ENCODE measurements at regions of chr2 and their contacts with region 1.

Region 1: DNA sequence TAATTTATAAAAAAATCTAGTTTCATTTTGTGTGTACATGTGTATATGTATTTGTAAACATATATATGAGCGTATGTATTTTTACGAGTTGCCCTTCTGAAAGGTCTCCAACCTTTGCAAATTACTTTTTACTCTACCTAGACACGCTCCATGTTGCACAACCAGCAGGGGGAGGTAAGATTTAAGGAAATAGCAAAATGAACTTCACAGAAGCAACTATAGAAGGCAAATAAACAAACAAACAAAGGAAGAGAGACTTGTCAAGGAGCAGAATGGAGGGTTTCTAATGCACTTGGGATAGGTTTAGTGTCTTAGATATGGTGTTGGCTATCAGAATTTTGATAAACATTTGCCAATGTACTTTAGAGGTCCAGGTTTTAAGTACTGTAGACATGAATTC is 820.5 kb upstream of the POU3F3 start:
- DNase-seq: no peak
- ATAC-seq: no peak
- H3K4me3 ChIP-seq: no peak overlapping the region
- H3K27ac ChIP-seq: no peak overlapping the region
- H3K4me1 ChIP-seq: no peaks in the 10 kb centered on the region
- H3K27me3 ChIP-seq: peaks cover 0 to 2% (median 0%) of the 10 kb centered on the region in 3 donors
- CTCF ChIP-seq: no peak

Region 2: DNA sequence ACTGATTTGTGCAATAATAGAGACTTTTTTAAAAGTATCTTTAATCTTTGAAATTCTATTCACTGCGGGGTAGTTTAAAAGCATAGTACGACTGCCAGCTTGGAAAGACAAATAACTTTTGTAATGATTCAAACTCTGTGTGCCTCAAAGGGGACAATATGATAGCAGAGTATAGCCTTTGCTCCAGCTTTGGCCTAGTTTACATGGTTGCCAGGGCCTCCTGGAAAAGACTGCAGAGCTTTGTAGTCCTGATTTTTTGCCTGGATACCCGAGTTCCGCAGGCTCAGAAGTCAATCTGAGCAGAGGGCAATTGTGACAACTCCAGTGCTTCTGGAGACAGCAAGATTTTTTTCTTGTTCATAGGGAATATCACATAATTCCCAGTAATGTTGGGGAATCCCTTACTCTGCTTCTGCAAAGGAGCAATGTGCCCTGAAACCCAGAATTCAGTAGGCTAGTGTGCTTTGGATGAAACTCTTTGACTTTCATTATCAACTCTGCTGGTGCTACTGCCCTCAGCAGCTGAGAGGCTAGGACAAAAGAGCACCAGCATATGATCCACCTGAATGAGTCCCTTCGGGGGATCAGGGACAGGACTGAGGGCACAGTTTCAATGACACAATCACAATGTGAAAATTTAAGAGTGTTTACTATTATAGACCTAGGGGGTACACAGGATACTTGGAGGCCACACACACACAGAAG is 503.4 kb before region 1 on chr2:
- intact Hi-C with region 1: loop called in 1 of 2 experiments (anchors 10 kb)
- DNase-seq: no peak
- ATAC-seq: no peak
- H3K4me3 ChIP-seq: no peak overlapping the region
- H3K27ac ChIP-seq: no peak overlapping the region
- H3K4me1 ChIP-seq: no peaks in the 10 kb centered on the region
- H3K27me3 ChIP-seq: no peaks in the 10 kb centered on the region
- CTCF ChIP-seq: no peak